ENCODE measurements at regions of chr19 and their contacts with region 1.

Region 1: DNA sequence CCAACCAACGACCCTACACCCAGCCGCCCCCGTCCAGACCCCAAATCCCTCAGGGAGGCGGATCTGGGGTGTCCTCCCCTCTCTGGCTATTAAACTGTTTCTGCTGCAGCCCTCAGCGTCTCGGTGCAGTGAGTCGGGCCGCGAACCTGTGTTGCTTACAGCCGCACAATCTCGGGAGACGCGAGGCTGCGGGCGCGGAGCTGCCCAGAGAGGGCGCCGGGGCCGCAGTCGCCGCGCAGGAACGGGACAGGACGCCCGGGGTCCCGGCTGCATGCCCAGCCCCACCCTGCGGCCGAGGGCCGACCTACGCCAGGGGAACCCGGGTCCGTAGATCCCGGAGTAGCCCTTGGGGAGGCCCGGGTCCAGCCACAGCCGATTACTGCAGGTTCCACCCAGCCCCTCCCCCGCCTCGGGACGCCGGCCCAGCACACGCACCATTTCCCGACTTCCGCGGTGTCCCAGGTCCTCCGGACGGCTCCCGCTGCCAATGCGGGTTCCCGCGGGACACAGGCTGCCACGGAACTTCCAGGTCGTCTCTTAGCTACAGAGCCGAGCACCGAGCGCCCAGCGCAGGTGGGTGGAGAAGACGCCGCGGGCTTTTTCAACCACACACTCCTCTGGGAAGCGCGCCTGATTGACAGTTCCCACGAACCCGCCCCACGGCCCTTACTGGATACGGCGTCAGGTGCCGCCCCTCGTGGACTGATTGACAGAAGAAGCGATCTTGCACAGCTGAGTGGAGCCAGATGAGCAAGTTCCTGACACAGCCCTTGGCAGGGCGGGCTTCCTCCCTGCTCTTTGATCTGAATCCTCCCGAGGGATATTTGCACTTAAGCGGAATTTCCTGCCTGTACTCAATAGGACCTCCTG is at the start of gene ZNF799:
- DNase-seq: peak; percentile 96 to 98
- H3K4me3 ChIP-seq: peak within 1 kb of the TSS; percentile 53
- H3K4me3 Mint-ChIP-seq: peak within 1 kb of the TSS; percentile 94
- H3K27ac Mint-ChIP-seq: peak within 1 kb of the TSS; percentile 94
- H3K4me1 ChIP-seq: no peaks in the 10 kb centered on the region
- H3K4me1 Mint-ChIP-seq: no peaks in the 10 kb centered on the region
- H3K27me3 ChIP-seq: no peaks in the 10 kb centered on the region
- H3K27me3 Mint-ChIP-seq: no peaks in the 10 kb centered on the region
- CTCF ChIP-seq: no peak
- total RNA-seq, gene ZNF799: 7.4 and 8.0 TPM in 2 replicates

Region 2: GRCh38 chr19:12440541-12441316 is 39.9 kb after region 1 on chr19 and contains the start of gene ZNF443:
- CTCF ChIA-PET with region 1: no interaction called
- POLR2A ChIA-PET with region 1: no interaction called
- intact Hi-C with region 1: loop called (anchors 2 kb)
- DNase-seq: peak; percentile 99
- H3K4me3 ChIP-seq: peak within 1 kb of the TSS; percentile 80
- H3K4me3 Mint-ChIP-seq: peak within 1 kb of the TSS; percentile 99
- H3K27ac Mint-ChIP-seq: peak within 1 kb of the TSS; percentile 97
- H3K4me1 ChIP-seq: no peaks in the 10 kb centered on the region
- H3K4me1 Mint-ChIP-seq: no peaks in the 10 kb centered on the region
- H3K27me3 ChIP-seq: no peaks in the 10 kb centered on the region
- H3K27me3 Mint-ChIP-seq: no peaks in the 10 kb centered on the region
- CTCF ChIP-seq: no peak
- total RNA-seq, gene ZNF443: 5.1 and 6.1 TPM in 2 replicates

Region 3: GRCh38 chr19:12484371-12485051 is 83.6 kb after region 1 on chr19 and contains the start of gene ZNF709:
- CTCF ChIA-PET with region 1: no interaction called
- POLR2A ChIA-PET with region 1: no interaction called
- intact Hi-C with region 1: loop called (anchors 1 kb)
- DNase-seq: peak; percentile 89 to 90
- H3K4me3 ChIP-seq: peak within 1 kb of the TSS; percentile 75
- H3K4me3 Mint-ChIP-seq: peak within 1 kb of the TSS; percentile 93
- H3K27ac Mint-ChIP-seq: peak within 1 kb of the TSS; percentile 73
- H3K4me1 ChIP-seq: no peaks in the 10 kb centered on the region
- H3K4me1 Mint-ChIP-seq: no peaks in the 10 kb centered on the region
- H3K27me3 ChIP-seq: no peaks in the 10 kb centered on the region
- H3K27me3 Mint-ChIP-seq: no peaks in the 10 kb centered on the region
- CTCF ChIP-seq: no peak
- total RNA-seq, gene ZNF709: 1.7 and 2.4 TPM in 2 replicates